ENCODE measurements at regions of chr17 and their contacts with region 1.

Region 1: DNA sequence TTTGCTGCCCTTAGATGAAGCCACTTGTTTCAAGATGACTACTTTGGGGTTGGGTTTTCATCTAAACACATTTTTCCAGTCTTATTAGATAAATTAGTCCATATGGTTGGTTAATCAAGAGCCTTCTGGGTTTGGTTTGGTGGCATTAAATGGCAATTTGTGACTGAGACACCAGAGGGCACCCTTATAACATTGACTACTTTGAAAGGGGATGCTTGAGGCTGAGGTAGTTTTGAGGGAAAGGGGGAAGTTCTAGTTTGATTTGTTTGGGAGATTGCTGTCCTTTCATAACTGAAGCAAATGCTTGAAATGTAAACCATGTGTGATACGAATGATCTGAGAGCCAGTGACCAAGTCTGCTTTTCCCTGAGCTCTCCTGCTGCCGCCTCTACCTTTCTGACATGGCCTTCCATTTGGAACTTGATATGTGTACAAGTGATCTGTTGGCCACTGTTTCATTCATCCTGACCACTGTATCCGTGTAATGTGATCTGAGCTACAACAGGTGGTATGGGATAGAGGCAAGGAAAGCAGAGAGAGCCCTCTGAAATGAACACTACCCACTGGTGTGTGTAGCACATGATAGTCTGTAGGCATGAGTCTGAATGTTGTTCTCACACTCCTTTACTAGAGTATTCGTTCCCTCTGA is 5.8 kb upstream of the RARA start:
- DNase-seq: no peak
- CTCF ChIP-seq: peak; percentile 66

Region 2: GRCh38 chr17:39996800-39997199 is 306.3 kb before region 1 on chr17:
- CTCF ChIA-PET with region 1: no interaction called
- POLR2A ChIA-PET with region 1: no interaction called
- DNase-seq: no peak
- CTCF ChIP-seq: no peak

Region 3: GRCh38 chr17:40287494-40288369 is 15.4 kb before region 1 on chr17 and contains the start of gene CDC6:
- CTCF ChIA-PET with region 1: interaction called, 43 read pairs
- POLR2A ChIA-PET with region 1: no interaction called
- DNase-seq: peak; percentile 98
- CTCF ChIP-seq: no peak

Region 4: DNA sequence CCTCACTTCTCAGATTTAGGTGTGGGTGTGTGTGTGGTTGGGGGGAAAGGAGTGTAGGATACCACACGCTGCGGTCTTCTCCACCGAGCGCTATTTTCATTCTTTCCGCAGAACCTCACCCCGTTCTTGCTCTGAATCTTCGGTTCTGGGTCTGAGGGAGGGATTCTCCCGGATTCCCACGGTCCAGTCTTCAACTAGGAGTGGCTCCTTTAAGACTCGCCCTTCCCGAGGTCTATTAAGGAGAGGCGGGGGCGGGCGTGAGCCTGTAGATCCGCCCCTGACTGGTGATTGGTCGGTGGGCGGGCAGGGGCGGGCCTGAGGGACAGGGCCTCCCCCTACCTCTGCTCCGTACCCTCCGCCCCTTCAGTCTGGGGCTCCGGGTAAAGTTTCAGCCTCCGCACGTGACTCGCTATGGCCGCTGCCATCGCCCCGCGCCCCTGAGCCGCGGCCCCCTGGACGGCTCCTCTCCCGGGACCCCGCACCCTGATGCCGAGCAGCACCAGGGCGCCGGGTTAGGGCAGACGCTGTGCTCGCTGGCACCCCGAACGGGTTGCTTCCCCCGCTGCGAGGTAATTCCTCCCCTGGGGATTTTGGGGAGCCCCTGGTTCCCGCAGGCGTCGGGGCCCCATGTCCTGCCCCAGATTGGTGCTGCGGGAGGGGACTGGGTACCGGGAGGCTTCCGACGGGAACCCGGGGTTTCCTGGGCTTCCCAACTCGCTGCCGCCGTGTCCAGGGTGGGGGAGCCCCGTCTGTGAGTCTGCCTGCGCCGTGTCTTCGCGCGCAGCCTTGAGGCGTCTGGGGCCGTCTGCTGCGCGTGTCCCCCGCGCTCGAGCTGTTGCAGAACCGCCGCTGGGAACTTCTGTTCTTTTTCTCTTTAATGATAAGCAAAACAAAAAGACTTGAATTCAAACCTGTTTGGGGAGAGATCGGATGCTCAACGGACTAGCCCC is 15.0 kb after region 1 on chr17:
- CTCF ChIA-PET with region 1: interaction called, 163 read pairs
- POLR2A ChIA-PET with region 1: no interaction called
- DNase-seq: peak; percentile 98
- CTCF ChIP-seq: no peak

Region 5: GRCh38 chr17:40340880-40341807 is 38.0 kb after region 1 on chr17:
- CTCF ChIA-PET with region 1: interaction called, 19 read pairs
- POLR2A ChIA-PET with region 1: no interaction called
- DNase-seq: peak; percentile 83
- CTCF ChIP-seq: no peak